ENCODE measurements at regions of chr12 and their contacts with region 1.

Region 1: GRCh38 chr12:81617915-81618314 is 141.2 kb downstream of the PPFIA2 start:
- DNase-seq: no peak
- ATAC-seq: no peak
- H3K4me3 ChIP-seq: no peak overlapping the region
- H3K27ac ChIP-seq: no peak overlapping the region
- H3K4me1 ChIP-seq: no peaks in the 10 kb centered on the region
- H3K27me3 ChIP-seq: no peaks in the 10 kb centered on the region
- CTCF ChIP-seq: no peak

Region 2: DNA sequence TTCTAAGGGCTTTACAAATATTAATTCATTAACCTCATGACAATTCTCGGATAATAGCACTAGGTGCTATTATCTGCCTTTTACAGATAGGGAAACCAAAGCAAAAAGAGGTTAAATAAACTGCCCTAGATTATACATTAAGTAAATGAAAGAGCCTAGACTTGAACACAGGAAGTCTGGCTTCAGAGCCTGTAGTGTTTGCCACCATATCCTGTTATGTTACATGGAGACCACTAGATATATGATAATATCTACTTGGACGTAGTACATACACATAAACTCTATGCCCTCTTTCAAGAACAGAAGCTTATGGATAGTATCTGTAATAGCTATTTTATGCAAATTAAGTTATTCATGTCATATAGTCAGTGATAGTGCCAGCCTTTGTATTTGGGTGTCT is 927.4 kb before region 1 on chr12:
- CTCF ChIA-PET with region 1: no interaction called
- POLR2A ChIA-PET with region 1: interaction called, 10 read pairs
- in situ Hi-C with region 1: no loop called
- intact Hi-C with region 1: no loop called
- DNase-seq: no peak
- ATAC-seq: no peak
- H3K4me3 ChIP-seq: no peak overlapping the region
- H3K27ac ChIP-seq: no peak overlapping the region
- H3K4me1 ChIP-seq: no peaks in the 10 kb centered on the region
- H3K27me3 ChIP-seq: no peaks in the 10 kb centered on the region
- CTCF ChIP-seq: no peak

Measured in Panc1 (cell line).